SK-MEL-5 (cell line): ENCODE measurements at regions of chr12 and their contacts with region 1.

Region 1: DNA sequence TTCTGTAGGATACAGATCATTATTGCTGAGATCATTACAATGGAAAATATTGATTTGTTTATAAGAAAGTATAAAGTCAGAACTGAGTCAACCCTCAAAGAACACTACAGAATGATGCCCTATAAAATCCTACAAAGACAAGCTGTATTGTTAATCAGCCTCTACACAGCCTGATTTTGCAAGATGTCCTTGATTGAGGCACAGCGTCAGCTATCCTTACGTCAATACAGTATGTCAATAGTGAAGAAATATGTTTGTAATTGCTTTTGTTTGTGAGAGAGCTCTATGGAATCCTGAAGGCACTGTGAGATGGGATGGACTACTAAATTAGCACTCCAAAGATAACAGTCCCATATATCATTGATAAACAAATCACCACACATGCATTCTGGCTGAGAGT is 70.8 kb downstream of the RASSF9 start:
- DNase-seq: peak; percentile 71

Region 2: GRCh38 chr12:85733221-85733840 is 32.1 kb before region 1 on chr12:
- in situ Hi-C with region 1: loop called (anchors 5 kb)
- DNase-seq: peak; percentile 96